Mammary epithelial cell (primary cell): ENCODE measurements at regions of chr17 and their contacts with region 1.

Region 1: DNA sequence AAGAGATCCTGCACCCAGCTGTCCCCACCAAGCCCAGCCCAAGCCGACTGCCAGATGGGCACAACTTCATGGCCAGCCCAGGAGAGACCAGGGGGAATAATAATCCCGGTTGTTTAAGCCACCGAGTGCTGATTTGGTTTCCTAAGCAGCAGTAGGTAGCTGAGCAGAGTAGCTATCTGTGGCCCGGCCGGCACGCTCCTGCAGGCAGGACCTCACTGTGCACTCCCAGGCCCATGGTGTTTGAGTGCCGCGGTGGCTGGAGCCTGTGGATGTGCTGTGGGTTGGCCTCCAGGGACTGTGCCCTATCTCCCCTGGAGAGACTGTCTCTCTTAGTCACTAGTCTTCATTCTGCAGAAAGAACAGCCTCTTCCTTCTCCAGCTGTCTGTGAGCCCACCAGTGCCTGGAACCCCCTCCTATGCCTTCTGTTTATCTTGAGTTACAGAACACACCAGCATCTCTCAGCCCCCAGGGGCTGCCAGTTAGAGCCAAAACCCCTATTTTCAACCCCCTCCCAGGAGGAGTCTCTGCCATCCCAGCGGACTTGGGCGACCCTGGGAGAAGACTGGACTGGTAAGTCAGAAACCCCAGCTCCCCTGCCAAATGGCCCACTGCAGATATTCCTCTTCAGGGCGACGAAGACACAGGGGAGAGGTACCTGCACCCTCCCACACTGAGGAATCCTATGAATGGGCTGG is 152.0 kb downstream of the SDK2 start:
- DNase-seq: no peak
- H3K4me3 ChIP-seq: no peak overlapping the region
- H3K27ac ChIP-seq: no peak overlapping the region
- H3K4me1 ChIP-seq: no peaks in the 10 kb centered on the region
- H3K27me3 ChIP-seq: no peaks in the 10 kb centered on the region
- CTCF ChIP-seq: no peak

Region 2: DNA sequence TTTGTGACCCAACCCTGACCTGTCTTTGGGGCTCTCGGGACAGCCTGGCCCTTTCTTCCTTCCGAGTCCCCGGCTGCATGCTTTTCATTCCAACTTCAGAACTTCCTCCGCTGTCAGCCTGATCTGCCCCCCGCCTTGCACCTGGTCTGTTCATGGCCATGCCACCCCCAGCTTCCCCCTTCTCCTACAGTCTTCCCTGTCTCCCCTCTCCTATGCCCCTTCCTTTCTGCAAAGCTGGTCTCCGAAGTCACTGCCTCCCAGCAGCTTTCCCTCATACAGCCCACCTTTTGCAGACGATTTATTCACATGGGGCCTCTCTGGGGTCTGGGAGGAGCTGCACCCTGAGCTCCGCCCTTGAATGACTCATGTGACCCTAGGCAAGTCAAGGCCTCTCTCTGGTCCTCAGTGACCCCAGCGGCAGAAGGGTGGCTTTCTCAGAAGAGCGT is 199.1 kb after region 1 on chr17:
- CTCF ChIA-PET with region 1: interaction called, 10 read pairs
- dilution Hi-C with region 1: no loop called
- in situ Hi-C with region 1: no loop called
- intact Hi-C with region 1: no loop called
- DNase-seq: no peak
- H3K4me3 ChIP-seq: no peak overlapping the region
- H3K27ac ChIP-seq: no peak overlapping the region
- H3K4me1 ChIP-seq: no peaks in the 10 kb centered on the region
- H3K27me3 ChIP-seq: no peaks in the 10 kb centered on the region
- CTCF ChIP-seq: no peak